ENCODE measurements at regions of chr6 and their contacts with region 1.

Region 1: GRCh38 chr6:25556516-25556915 is 95.5 kb upstream of the SCGN start:
- DNase-seq: peak; percentile 74
- ATAC-seq: peak; percentile 77
- H3K4me3 ChIP-seq: no peak overlapping the region
- H3K27ac ChIP-seq: no peak overlapping the region
- H3K4me1 ChIP-seq: no peaks in the 10 kb centered on the region
- H3K27me3 ChIP-seq: no peaks in the 10 kb centered on the region
- CTCF ChIP-seq: peak; percentile 77
- POLR2A ChIP-seq: no peak
- RAD21 ChIP-seq: peak; percentile 66

Region 2: DNA sequence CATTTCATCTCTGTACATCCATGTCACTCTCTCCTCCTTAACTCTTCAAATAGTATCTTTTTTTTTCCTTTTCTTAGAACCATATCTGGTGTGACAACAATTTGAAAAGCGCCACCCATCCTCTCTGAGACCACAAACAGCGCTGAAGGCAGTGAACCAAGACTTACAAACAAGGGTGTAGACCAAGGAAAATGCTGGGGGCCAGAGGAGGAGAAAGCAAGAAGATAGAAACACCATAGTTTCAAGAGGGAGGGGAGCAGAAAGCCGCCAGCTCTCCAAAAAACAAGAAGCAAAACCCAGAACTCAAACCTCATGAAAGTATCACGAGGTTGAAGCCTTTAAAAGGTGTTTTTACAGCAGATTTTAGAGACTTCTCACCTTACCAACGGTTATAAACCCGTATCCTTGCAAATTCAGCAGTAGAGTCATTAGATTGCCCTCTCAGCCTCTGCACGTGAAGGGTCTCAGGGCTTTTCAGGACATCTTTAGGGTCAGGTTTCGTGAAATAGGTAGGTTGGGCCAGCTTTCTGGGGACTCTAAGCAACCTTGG is 607.4 kb before region 1 on chr6:
- CTCF ChIA-PET with region 1: no interaction called
- POLR2A ChIA-PET with region 1: no interaction called
- dilution Hi-C with region 1: no loop called
- in situ Hi-C with region 1: no loop called
- intact Hi-C with region 1: no loop called
- DNase-seq: no peak
- ATAC-seq: no peak
- H3K4me3 ChIP-seq: no peak overlapping the region
- H3K27ac ChIP-seq: no peak overlapping the region
- H3K4me1 ChIP-seq: peaks cover 4% of the 10 kb centered on the region; the same call in 1 of the 2 replicates
- H3K27me3 ChIP-seq: peaks cover 1% of the 10 kb centered on the region; the same call in 1 of the 2 replicates
- CTCF ChIP-seq: no peak
- POLR2A ChIP-seq: no peak
- RAD21 ChIP-seq: no peak

Region 3: DNA sequence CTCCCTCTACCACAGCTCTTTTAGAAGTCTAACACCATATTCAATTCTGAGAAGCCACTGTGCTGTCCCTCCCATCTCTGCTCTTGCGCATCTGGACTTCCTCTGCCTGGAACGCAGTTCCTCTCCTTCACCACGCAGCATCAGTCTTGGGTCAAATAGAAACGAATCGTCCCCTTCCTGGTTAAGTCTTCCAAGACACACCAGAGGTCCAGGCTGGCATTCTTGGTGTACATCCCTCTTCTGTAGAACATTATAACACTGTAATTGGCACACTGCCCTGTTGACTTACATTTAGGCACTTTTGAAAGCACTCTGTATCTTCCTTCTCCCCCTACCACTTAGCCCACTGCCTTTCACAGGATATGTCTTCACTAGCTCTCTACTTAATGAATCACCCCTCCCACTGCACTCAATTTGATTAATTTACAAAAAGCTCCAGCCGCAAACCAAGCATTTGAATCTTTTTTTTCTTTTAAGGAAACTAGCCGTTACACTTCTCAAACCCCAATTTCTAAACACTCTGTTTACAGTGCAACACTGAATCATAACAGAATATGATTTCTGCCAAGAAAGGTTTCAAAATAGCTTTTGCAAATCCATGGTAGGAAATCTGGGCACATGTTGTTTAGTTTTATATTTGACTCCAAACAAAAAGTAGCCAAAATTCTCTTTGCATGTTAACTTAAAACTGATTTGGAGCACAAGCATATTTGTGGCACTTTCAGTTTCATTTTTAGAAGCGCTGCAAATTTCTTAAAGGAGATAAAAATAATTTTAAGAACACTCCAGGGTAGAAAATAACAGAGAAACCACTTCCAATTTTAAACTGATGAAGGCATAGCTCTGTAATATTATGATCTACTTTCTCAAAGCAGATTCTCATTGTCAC is 418.0 kb before region 1 on chr6:
- CTCF ChIA-PET with region 1: no interaction called
- POLR2A ChIA-PET with region 1: no interaction called
- dilution Hi-C with region 1: no loop called
- in situ Hi-C with region 1: no loop called
- intact Hi-C with region 1: loop called (anchors 10 kb)
- DNase-seq: peak; percentile 62
- ATAC-seq: peak; percentile 91
- H3K4me3 ChIP-seq: peak overlapping the region; percentile 40
- H3K27ac ChIP-seq: peak overlapping the region; percentile 42
- H3K4me1 ChIP-seq: no peaks in the 10 kb centered on the region
- H3K27me3 ChIP-seq: no peaks in the 10 kb centered on the region
- CTCF ChIP-seq: no peak; the same call in 1 of the 2 replicates
- POLR2A ChIP-seq: no peak
- RAD21 ChIP-seq: no peak

Region 4: GRCh38 chr6:25223490-25223991 is 333.0 kb before region 1 on chr6:
- CTCF ChIA-PET with region 1: interaction called, 7 read pairs
- POLR2A ChIA-PET with region 1: no interaction called
- dilution Hi-C with region 1: no loop called
- in situ Hi-C with region 1: loop called (anchors 10 kb)
- intact Hi-C with region 1: loop called (anchors 1 kb)
- DNase-seq: peak; percentile 73
- ATAC-seq: peak; percentile 96
- H3K4me3 ChIP-seq: no peak overlapping the region
- H3K27ac ChIP-seq: no peak overlapping the region
- H3K4me1 ChIP-seq: no peaks in the 10 kb centered on the region
- H3K27me3 ChIP-seq: no peaks in the 10 kb centered on the region
- CTCF ChIP-seq: peak; percentile 95
- POLR2A ChIP-seq: no peak
- RAD21 ChIP-seq: peak; percentile 94

Region 5: GRCh38 chr6:25417046-25417605 is 139.4 kb before region 1 on chr6:
- CTCF ChIA-PET with region 1: no interaction called
- POLR2A ChIA-PET with region 1: no interaction called
- dilution Hi-C with region 1: no loop called
- in situ Hi-C with region 1: no loop called
- intact Hi-C with region 1: no loop called
- DNase-seq: no peak
- ATAC-seq: no peak; the same call in 1 of the 2 replicates
- H3K4me3 ChIP-seq: no peak overlapping the region
- H3K27ac ChIP-seq: no peak overlapping the region
- H3K4me1 ChIP-seq: no peaks in the 10 kb centered on the region
- H3K27me3 ChIP-seq: no peaks in the 10 kb centered on the region
- CTCF ChIP-seq: no peak
- POLR2A ChIP-seq: no peak
- RAD21 ChIP-seq: no peak

Region 6: GRCh38 chr6:26659042-26659999 is 1102.8 kb after region 1 on chr6 and contains the start of gene ZNF322:
- CTCF ChIA-PET with region 1: no interaction called
- POLR2A ChIA-PET with region 1: no interaction called
- dilution Hi-C with region 1: no loop called
- in situ Hi-C with region 1: no loop called
- intact Hi-C with region 1: no loop called
- DNase-seq: peak; percentile 90
- ATAC-seq: peak; percentile 99
- H3K4me3 ChIP-seq: peak within 1 kb of the TSS; percentile 87
- H3K27ac ChIP-seq: peak within 1 kb of the TSS; percentile 94
- H3K4me1 ChIP-seq: 0 out of 2 replicates have a peak, but pooled peaks cover 2% of the 10 kb centered on the region
- H3K27me3 ChIP-seq: no peaks in the 10 kb centered on the region
- CTCF ChIP-seq: no peak
- POLR2A ChIP-seq: peak; percentile 68; the same call in 1 of the 2 replicates
- RAD21 ChIP-seq: no peak
- total RNA-seq, gene ZNF322: 18.9 and 23.3 TPM in 2 replicates